Activated CD4-positive, alpha-beta memory T cell treated with anti-CD3 and anti-CD28 coated beads, Interleukin-2, amount 10 ng/mL, durations not matched to agents 7 days and 5 days (primary cell): ENCODE measurements at regions of chr22 and their contacts with region 1.

Region 1: DNA sequence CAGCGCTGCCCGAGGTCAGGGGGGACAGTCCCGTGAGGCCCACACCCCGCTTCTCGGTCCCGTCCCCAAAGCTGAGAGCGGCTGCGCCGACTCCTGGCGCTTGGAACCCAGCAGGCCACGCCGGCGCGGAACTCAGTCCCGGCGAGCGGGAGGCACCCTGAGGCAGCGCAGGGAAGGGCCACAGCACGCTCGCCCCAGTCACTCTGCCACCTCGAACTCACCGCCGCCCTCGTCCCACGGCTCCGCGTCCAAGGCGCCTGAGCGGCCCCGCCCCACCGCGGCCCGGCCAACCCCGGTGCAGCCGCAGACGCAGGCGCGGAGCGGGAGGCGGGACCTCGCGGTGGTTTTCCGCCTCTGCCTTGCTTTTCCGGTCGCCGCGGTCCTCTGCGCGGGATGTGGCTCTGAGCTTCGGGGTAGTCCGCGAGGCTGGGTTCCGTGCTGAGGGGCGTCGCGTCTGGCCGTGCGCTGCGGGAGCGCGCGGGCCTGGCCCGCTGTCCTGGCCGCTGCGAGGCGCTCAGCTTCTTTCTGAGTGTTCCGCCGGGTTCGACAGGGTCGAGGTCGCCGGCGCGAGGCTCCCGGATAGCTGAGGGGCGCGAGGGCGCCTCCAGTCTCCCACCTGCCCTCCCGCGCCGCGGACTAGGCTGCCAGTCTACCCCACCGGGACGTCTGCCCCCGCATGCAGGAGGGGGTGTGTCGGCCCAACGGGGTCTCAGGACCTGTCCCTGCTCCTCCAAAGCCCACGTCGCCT is at the start of gene CDPF1:
- DNase-seq: peak; percentile 92
- H3K4me3 Mint-ChIP-seq: peak within 1 kb of the TSS; percentile 73
- H3K27ac Mint-ChIP-seq: peak within 1 kb of the TSS; percentile 80
- H3K4me1 Mint-ChIP-seq: peaks cover 43% of the 10 kb centered on the region
- H3K27me3 Mint-ChIP-seq: peaks cover 4% of the 10 kb centered on the region
- total RNA-seq, gene CDPF1: 9.6 to 11.8 TPM

Region 2: GRCh38 chr22:46150034-46150654 is 100.1 kb before region 1 on chr22 and contains the start of gene PPARA:
- CTCF ChIA-PET with region 1: interaction called, 4 read pairs
- POLR2A ChIA-PET with region 1: interaction called, 15 read pairs
- DNase-seq: peak; percentile 87
- H3K4me3 Mint-ChIP-seq: peak within 1 kb of the TSS; percentile 73
- H3K27ac Mint-ChIP-seq: peak within 1 kb of the TSS; percentile 16
- H3K4me1 Mint-ChIP-seq: peaks cover 18% of the 10 kb centered on the region
- H3K27me3 Mint-ChIP-seq: peaks cover 40% of the 10 kb centered on the region
- total RNA-seq, gene PPARA: 12.9 to 13.4 TPM

Region 3: GRCh38 chr22:46239261-46240048 is 10.8 kb before region 1 on chr22:
- CTCF ChIA-PET with region 1: interaction called, 3 read pairs
- POLR2A ChIA-PET with region 1: interaction called, 13 read pairs
- DNase-seq: no peak
- H3K4me3 Mint-ChIP-seq: no peak overlapping the region
- H3K27ac Mint-ChIP-seq: peak overlapping the region; percentile 64
- H3K4me1 Mint-ChIP-seq: peaks cover 22% of the 10 kb centered on the region
- H3K27me3 Mint-ChIP-seq: no peaks in the 10 kb centered on the region

Region 4: DNA sequence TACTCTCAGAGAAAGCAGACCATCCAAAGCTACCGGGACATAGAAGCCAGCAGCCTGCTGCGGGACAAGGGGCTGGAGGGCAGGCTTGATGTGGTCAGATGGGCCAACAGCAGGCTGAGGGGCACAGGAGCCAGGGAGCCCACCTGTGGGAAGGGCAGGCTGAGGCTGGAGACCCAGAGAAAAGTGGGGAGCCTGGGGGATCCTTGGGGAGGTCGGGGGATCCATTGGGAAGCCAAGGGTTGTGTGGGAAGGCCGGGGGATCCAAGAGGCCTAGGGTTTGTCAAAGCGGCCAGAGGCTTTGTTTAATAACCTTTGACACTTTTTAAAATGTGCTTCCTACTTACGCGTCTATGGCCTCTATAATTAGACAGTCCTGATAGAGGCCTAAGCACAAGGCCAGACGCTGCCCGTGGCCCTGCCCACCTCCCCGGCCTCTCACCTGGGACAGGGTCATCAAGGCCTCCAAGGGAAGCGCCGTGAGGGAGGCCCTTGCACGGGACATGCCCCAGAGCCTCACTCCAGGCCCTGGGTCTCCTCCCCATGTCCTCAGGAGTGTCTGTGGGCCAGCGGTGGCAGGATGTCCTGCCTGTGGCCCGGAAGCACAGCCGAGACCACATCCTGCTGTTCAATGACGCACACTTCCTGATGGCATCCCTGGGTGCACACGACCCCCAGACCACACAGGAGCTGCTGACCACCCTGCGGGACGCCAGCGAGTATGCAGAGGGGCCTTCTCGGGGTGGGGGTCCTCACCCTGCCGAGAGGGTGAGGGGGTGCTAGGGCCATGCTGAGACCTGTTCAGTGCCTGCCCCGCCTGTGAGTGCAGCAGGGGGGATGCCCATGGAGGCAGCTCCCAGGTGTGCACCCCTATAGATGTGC is 37.9 kb after region 1 on chr22:
- CTCF ChIA-PET with region 1: no interaction called
- POLR2A ChIA-PET with region 1: interaction called, 10 read pairs
- DNase-seq: peak; percentile 81
- H3K4me3 Mint-ChIP-seq: peak overlapping the region; percentile 66
- H3K27ac Mint-ChIP-seq: peak overlapping the region; percentile 86
- H3K4me1 Mint-ChIP-seq: peaks cover 42% of the 10 kb centered on the region
- H3K27me3 Mint-ChIP-seq: no peaks in the 10 kb centered on the region

Region 5: DNA sequence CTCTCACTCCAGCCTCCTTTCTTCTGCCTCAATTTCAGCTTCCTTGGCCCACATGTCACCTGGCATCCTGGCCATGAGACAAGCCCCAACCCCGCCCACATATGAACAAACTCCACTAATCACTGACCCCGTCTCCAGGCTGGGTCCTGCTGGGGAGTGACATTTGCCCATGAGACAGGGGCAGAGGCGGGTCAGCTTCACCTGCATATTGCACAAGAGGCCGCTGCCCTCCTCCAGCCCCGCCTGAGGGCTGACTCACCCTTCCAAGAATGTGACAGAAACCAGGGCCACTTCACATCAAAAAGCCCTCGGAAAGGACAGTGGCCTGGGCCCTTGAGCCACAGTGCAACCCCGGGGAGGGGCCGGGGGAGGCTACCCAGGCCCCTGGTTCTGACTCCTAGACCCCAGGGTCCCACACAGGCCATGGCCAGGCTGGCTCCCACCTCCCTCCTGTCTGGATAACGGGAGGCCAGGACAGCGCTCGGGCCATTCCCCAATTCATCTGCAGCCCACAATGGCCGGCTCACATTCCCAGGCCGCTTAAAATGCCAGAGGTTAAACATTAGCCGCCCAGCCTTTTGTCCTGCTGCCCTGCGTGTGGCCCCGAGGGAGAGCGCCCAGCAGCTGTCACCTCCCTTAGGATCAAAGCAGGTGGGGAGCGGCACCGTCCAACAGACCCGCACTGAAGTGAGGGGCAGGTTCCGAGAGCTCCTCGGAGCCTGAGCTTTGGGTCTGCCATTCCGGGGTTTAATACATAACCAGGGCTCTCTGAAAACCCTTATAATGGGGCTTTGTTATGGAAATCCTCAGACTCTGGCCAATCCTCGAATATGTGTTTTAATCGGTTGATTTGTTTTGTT is 127.6 kb after region 1 on chr22:
- CTCF ChIA-PET with region 1: no interaction called
- POLR2A ChIA-PET with region 1: no interaction called
- DNase-seq: no peak
- H3K4me3 Mint-ChIP-seq: no peak overlapping the region
- H3K27ac Mint-ChIP-seq: no peak overlapping the region
- H3K4me1 Mint-ChIP-seq: peaks cover 5% of the 10 kb centered on the region
- H3K27me3 Mint-ChIP-seq: peaks cover 19% of the 10 kb centered on the region